ENCODE measurements at regions of chr20 and their contacts with region 1.

Region 1: DNA sequence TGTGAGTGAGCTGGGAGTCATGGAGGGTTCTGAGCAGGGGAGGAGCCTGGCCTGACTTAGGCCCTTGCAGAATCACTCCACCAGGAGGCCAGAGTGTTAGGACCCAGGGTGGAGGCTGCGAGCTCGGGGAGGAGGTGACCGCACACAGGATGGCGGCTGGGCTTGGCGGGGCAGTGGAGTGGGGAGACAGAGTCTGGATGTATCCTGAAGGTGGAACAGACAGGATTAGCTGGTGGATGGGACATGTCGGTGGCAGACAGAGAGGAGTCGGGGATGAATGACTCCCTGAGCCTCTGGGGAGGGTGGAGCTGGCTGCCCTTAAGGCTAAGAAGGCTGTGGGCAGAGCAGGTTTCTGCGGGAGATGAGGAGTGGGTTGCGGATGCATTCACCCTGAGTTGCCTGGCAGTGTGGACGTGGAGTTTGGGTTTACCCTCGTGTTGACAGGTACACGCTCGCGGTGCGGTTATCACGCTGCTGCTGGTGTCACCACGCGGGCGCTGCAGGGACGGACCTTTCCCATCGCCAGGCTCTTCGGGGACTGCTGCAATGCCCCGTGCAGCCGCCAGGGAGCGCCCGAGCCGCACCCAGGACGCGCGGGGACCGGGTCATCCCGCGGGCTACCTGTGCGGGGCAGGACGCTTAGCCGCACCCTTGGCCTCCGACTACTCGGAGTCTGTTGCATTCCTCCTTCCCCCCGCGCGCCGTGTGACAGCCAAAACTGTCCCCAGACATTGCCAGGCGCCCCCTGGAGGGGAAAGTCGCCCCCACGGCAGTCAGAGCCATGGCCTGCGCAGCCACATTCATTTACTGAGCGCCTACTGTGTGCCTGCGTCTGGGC is 43.0 kb upstream of the PTGIS start:
- DNase-seq: peak; percentile 87
- H3K4me3 ChIP-seq: peak overlapping the region in 1 of 4 donors; percentile 27
- H3K27ac ChIP-seq: peak overlapping the region in 3 of 4 donors; percentile 25 to 54 (median 45)
- H3K4me1 ChIP-seq: peaks cover 8 to 14% (median 10%) of the 10 kb centered on the region in 4 donors
- H3K27me3 ChIP-seq: no peaks in the 10 kb centered on the region
- CTCF ChIP-seq: peak; percentile 99 to 100 (median 100)
- EP300 ChIP-seq: no peak
- POLR2A ChIP-seq: no peak

Region 2: DNA sequence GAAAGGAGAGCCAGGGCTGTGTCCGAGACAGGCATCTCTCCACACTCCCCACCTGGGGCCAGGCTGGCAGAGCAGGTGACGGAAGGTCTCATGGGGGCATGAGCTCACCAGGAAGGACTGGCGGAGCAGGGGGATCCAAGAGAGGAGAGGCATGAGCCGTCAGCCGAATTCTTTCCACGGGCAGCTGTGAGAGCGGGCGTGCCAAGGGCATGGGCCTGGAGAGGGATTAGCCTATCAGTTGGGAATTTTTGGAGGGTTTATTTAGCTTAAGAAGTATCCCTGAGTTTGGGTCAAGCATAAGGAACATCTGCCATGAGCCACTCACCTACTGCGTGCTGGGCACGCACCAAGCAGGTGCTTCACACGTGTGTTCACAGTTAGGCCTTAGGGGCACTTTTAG is 272.9 kb before region 1 on chr20:
- in situ Hi-C with region 1: loop called in 1 of 4 experiments (anchors 10 kb)
- intact Hi-C with region 1: no loop called
- DNase-seq: no peak
- H3K4me3 ChIP-seq: no peak overlapping the region
- H3K27ac ChIP-seq: no peak overlapping the region
- H3K4me1 ChIP-seq: no peaks in the 10 kb centered on the region
- H3K27me3 ChIP-seq: no peaks in the 10 kb centered on the region
- CTCF ChIP-seq: no peak
- EP300 ChIP-seq: no peak
- POLR2A ChIP-seq: no peak

Region 3: DNA sequence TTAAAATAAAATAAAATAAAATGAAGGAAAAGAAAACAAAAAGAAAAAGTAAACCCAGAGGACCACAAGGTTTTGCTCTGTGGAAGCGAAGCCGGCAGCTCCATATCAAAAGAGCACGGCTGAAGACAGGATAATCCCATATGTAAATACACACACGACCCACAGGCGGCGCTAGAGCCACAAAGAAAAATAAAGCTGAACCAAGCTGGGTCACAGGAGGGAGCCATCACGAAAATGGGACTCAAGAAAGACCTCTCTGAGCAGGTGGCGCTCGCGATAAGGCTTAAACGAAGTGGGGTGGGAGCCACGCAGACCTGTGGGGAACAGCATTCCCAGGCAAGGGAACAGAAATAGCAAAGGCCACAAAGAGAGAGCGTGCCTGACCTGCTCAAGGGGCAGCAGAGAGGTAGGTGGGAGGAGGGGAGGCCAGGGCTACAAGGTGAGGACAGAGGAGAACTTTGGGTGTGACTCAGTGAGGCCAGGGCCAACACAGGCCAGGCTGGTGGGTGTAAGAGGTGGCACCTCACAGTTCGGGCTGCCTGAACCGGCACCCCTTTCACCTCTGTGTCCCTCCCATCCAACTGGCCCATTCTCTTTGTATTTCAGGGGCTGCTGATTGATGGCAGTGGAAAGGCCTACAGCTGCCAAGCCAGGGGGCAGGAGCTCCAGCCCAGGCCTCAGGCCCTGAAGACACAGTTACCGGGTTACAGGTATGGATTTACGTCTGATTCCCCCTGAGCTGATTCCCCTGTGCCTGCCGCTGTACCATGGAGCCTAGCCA is 69.0 kb before region 1 on chr20:
- in situ Hi-C with region 1: loop called (anchors 5 to 10 kb)
- intact Hi-C with region 1: loop called (anchors 2 kb)
- DNase-seq: peak; percentile 73
- H3K4me3 ChIP-seq: no peak overlapping the region
- H3K27ac ChIP-seq: peak overlapping the region in 1 of 4 donors; percentile 40
- H3K4me1 ChIP-seq: no peaks in the 10 kb centered on the region
- H3K27me3 ChIP-seq: no peaks in the 10 kb centered on the region
- CTCF ChIP-seq: peak; percentile 79 to 97 (median 81)
- EP300 ChIP-seq: no peak
- POLR2A ChIP-seq: no peak

Region 4: GRCh38 chr20:49846206-49846807 is 235.4 kb after region 1 on chr20:
- in situ Hi-C with region 1: loop called (anchors 5 to 25 kb)
- intact Hi-C with region 1: no loop called
- DNase-seq: peak; percentile 46
- H3K4me3 ChIP-seq: no peak overlapping the region
- H3K27ac ChIP-seq: no peak overlapping the region
- H3K4me1 ChIP-seq: peaks cover 0 to 11% (median 0%) of the 10 kb centered on the region in 4 donors
- H3K27me3 ChIP-seq: no peaks in the 10 kb centered on the region
- CTCF ChIP-seq: peak; percentile 63 to 73 (median 72)
- EP300 ChIP-seq: no peak
- POLR2A ChIP-seq: no peak

Region 5: GRCh38 chr20:49889935-49890333 is 279.0 kb after region 1 on chr20:
- in situ Hi-C with region 1: no loop called
- intact Hi-C with region 1: loop called (anchors 1 kb)
- DNase-seq: no peak
- H3K4me3 ChIP-seq: no peak overlapping the region
- H3K27ac ChIP-seq: peak overlapping the region in 1 of 4 donors; percentile 14
- H3K4me1 ChIP-seq: peaks cover 0 to 40% (median 16%) of the 10 kb centered on the region in 4 donors
- H3K27me3 ChIP-seq: no peaks in the 10 kb centered on the region
- CTCF ChIP-seq: peak in 4 of 5 experiments; percentile 17 to 41 (median 32)
- EP300 ChIP-seq: no peak
- POLR2A ChIP-seq: no peak

Region 6: GRCh38 chr20:49928401-49929141 is 317.7 kb after region 1 on chr20:
- in situ Hi-C with region 1: no loop called
- intact Hi-C with region 1: loop called (anchors 10 kb)
- DNase-seq: peak; percentile 88
- H3K4me3 ChIP-seq: no peak overlapping the region
- H3K27ac ChIP-seq: peak overlapping the region; percentile 49 to 77 (median 62)
- H3K4me1 ChIP-seq: peaks cover 3 to 14% (median 9%) of the 10 kb centered on the region in 4 donors
- H3K27me3 ChIP-seq: no peaks in the 10 kb centered on the region
- CTCF ChIP-seq: peak; percentile 89 to 97 (median 94)
- EP300 ChIP-seq: no peak
- POLR2A ChIP-seq: no peak

Region 7: DNA sequence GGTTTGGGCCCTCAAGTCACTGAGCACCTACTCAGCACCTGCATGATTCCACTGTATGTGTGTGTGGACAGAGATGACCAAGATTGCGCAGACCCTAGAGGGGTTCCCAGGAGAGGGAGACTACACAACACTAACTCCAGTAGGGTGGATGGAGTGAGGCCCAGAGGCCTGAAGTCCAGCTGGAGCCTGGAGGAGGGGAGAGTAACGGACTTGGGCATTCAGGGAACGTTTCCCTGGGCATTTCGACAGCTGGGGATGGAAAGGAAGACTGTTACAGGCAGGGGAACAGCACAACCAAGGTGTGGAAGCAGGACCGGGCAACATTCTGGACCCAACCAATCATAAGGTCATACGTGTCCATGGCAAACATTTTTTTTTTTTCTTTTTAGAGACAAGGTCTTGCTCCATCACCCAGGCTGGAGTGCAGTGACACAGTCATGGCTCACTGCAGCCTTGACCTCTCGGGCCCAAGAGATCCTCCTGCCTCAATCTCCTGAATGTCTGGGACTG is 568.6 kb after region 1 on chr20:
- in situ Hi-C with region 1: no loop called
- intact Hi-C with region 1: no loop called
- DNase-seq: no peak
- H3K4me3 ChIP-seq: no peak overlapping the region
- H3K27ac ChIP-seq: no peak overlapping the region
- H3K4me1 ChIP-seq: peaks cover 0 to 10% (median 0%) of the 10 kb centered on the region in 4 donors
- H3K27me3 ChIP-seq: no peaks in the 10 kb centered on the region
- CTCF ChIP-seq: peak in 1 of 5 experiments; percentile 39
- EP300 ChIP-seq: no peak
- POLR2A ChIP-seq: no peak

Measured in transverse colon (tissue), 4 donors.